GM12878 (cell line): ENCODE measurements at regions of chr22 and their contacts with region 1.

Region 1: DNA sequence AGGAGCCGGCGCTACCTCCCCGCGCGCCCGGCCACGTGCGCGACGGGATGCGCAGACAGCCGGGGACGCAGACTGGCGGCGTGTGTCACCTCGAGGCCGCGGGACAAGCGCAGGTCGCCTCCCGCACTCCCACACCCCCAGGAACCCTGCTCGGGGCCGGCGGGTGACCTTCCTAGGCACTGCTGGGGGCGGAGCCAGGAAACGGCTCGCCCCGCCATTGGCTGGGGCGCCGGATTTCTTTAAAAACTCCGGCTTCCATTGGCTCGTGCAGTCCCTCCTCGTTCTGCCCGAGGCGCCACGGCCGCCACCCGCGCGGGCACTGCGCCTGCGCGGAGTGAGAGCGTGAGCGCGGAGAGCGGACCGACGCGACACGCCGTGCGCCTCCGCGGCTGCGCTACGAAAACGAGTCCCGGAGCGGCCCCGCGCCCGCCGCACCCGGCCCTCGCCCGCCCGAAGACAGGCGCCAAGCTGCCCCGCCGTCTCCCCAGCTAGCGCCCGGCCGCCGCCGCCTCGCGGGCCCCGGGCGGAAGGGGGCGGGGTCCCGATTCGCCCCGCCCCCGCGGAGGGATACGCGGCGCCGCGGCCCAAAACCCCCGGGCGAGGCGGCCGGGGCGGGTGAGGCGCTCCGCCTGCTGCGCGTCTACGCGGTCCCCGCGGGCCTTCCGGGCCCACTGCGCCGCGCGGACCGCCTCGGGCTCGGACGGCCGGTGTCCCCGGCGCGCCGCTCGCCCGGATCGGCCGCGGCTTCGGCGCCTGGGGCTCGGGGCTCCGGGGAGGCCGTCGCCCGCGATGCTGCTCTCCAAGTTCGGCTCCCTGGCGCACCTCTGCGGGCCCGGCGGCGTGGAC is at the start of gene PIM3:
- DNase-seq: peak; percentile 84
- ATAC-seq: peak; percentile 82
- H3K4me3 ChIP-seq: peak within 1 kb of the TSS; percentile 98
- H3K27ac ChIP-seq: peak within 1 kb of the TSS; percentile 53
- H3K4me1 ChIP-seq: peaks cover 16% of the 10 kb centered on the region
- H3K27me3 ChIP-seq: no peaks in the 10 kb centered on the region
- CTCF ChIP-seq: no peak
- EP300 ChIP-seq: peak in 1 of 2 experiments; percentile 20; a peak in 1 of 4 replicates
- POLR2A ChIP-seq: peak; percentile 82
- RAD21 ChIP-seq: no peak
- polyA plus RNA-seq, gene PIM3: 0.31 to 1.5 TPM

Region 2: DNA sequence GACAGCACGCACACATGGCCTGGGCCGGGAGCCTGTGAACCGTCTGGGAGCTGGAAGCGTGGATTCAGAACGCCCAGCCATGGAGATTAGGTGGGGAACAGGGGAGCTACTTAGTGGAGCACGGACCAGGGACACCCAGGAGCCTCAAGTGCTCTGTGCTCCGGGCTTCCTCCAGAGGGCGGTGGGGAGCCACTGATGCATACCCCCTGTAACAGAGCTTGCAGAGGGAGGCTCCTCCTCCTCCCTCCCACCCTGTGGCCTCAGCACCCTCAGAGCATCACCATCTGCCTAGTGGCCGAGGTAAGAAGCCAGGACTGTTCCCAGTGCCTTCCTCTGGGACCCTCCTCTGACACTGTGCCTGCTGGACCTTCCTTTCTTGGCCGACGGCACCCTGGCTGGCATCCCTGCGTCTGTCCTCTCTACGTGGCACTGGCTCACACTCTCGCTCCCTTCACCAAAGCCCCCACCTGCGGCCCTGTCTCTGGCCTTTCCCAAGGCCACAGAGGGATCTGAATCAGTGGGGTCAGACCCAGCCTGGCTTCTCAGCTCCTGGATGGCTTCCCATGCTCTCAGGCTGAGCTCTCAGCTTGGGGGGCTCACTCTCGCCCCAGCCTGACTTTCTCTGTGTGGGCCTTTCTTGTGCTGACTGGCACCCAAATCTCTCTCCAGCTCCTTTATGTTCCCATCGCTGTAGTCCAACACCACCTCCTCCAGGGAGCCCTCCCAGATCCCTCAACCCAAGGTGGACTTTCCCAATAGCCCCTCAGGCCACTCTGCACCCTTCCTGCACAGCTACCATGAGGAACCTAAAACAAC is 913.6 kb before region 1 on chr22:
- CTCF ChIA-PET with region 1: no interaction called
- POLR2A ChIA-PET with region 1: no interaction called
- RAD21 ChIA-PET with region 1: no interaction called
- SMC1A ChIA-PET with region 1: no interaction called
- in situ Hi-C with region 1: no loop called
- intact Hi-C with region 1: no loop called
- DNase-seq: no peak
- ATAC-seq: no peak
- H3K4me3 ChIP-seq: no peak overlapping the region
- H3K27ac ChIP-seq: no peak overlapping the region
- H3K4me1 ChIP-seq: no peaks in the 10 kb centered on the region
- H3K27me3 ChIP-seq: no peaks in the 10 kb centered on the region
- CTCF ChIP-seq: peak in 2 of 3 experiments; percentile 21 to 25; a peak in 2 of 6 replicates
- EP300 ChIP-seq: no peak
- POLR2A ChIP-seq: no peak
- RAD21 ChIP-seq: no peak

Region 3: DNA sequence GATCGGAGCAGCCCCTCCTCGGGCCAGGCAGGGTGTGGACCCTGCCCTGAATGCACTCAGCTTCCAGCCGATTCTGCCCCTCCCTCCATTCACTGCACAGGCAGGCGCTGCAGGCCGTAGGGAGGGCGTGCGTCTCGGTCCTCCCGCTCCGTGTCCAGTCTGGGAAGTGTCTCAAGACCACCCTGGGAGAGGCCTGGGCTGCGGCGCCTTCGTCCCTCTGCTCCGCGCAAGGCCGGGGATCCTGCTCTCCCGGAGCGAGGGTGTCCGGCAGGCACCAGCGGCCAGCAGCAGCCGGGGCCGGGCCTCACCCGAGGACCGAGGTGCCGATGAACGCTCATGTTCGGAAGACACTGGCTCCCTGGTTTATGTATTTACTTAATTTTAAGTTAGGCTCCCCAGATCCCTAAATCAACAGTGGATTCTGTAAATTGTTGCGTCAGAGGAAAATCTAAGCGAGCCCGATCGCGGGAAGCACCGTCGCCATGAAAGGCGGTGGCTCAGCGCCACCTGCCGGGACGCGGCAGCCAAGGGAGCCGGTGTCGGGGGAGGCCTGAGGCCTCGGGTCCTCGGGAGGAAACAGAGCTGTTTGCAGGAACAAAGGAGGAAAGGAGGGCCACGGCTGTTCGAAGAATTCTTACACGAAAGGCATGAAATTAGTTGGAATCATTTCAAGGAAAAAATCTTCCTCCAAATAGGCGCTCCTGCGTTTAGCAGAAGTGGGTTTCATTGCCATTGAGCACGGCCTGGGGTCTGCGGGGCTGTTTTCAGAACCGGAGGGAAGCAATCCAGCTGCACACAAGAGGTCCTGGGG is 328.0 kb before region 1 on chr22:
- CTCF ChIA-PET with region 1: no interaction called
- POLR2A ChIA-PET with region 1: no interaction called
- RAD21 ChIA-PET with region 1: no interaction called
- SMC1A ChIA-PET with region 1: no interaction called
- in situ Hi-C with region 1: no loop called
- intact Hi-C with region 1: no loop called
- DNase-seq: no peak
- ATAC-seq: no peak
- H3K4me3 ChIP-seq: no peak overlapping the region
- H3K27ac ChIP-seq: no peak overlapping the region
- H3K4me1 ChIP-seq: no peaks in the 10 kb centered on the region
- H3K27me3 ChIP-seq: no peaks in the 10 kb centered on the region
- CTCF ChIP-seq: peak in 1 of 3 experiments; percentile 22; a peak in 1 of 6 replicates
- EP300 ChIP-seq: no peak
- POLR2A ChIP-seq: no peak
- RAD21 ChIP-seq: no peak

Region 4: GRCh38 chr22:49936018-49936952 is 24.1 kb before region 1 on chr22:
- CTCF ChIA-PET with region 1: interaction called, 6 read pairs
- POLR2A ChIA-PET with region 1: interaction called, 15 read pairs
- RAD21 ChIA-PET with region 1: interaction called, 15 read pairs
- SMC1A ChIA-PET with region 1: interaction called, 3 read pairs
- in situ Hi-C with region 1: no loop called
- intact Hi-C with region 1: no loop called
- DNase-seq: peak; percentile 69
- ATAC-seq: peak; percentile 87
- H3K4me3 ChIP-seq: peak overlapping the region; percentile 57
- H3K27ac ChIP-seq: peak overlapping the region; percentile 69
- H3K4me1 ChIP-seq: peaks cover 43% of the 10 kb centered on the region
- H3K27me3 ChIP-seq: no peaks in the 10 kb centered on the region
- CTCF ChIP-seq: no peak
- EP300 ChIP-seq: peak in 1 of 2 experiments; percentile 77; a peak in 2 of 4 replicates
- POLR2A ChIP-seq: peak; percentile 68
- RAD21 ChIP-seq: no peak

Region 5: GRCh38 chr22:49970528-49971231 is 10.3 kb after region 1 on chr22:
- CTCF ChIA-PET with region 1: interaction called, 3 read pairs
- POLR2A ChIA-PET with region 1: interaction called, 10 read pairs
- RAD21 ChIA-PET with region 1: interaction called, 6 read pairs
- SMC1A ChIA-PET with region 1: no interaction called
- in situ Hi-C with region 1: no loop called
- intact Hi-C with region 1: no loop called
- DNase-seq: peak; percentile 85
- ATAC-seq: peak; percentile 84
- H3K4me3 ChIP-seq: peak overlapping the region; percentile 76
- H3K27ac ChIP-seq: peak overlapping the region; percentile 89
- H3K4me1 ChIP-seq: peaks cover 41% of the 10 kb centered on the region
- H3K27me3 ChIP-seq: no peaks in the 10 kb centered on the region
- CTCF ChIP-seq: no peak
- EP300 ChIP-seq: peak in 1 of 2 experiments; percentile 75; a peak in 3 of 4 replicates
- POLR2A ChIP-seq: peak; percentile 91
- RAD21 ChIP-seq: no peak

Region 6: GRCh38 chr22:50185384-50186087 is 225.2 kb after region 1 on chr22 and contains the start of gene TRABD:
- CTCF ChIA-PET with region 1: no interaction called
- POLR2A ChIA-PET with region 1: interaction called, 3 read pairs
- RAD21 ChIA-PET with region 1: no interaction called
- SMC1A ChIA-PET with region 1: no interaction called
- in situ Hi-C with region 1: no loop called
- intact Hi-C with region 1: loop called (anchors 5 kb)
- DNase-seq: no peak
- ATAC-seq: peak; percentile 63
- H3K4me3 ChIP-seq: peak within 1 kb of the TSS; percentile 84
- H3K27ac ChIP-seq: peak within 1 kb of the TSS; percentile 89
- H3K4me1 ChIP-seq: peaks cover 35% of the 10 kb centered on the region
- H3K27me3 ChIP-seq: no peaks in the 10 kb centered on the region
- CTCF ChIP-seq: no peak
- EP300 ChIP-seq: no peak
- POLR2A ChIP-seq: peak; percentile 78
- RAD21 ChIP-seq: no peak
- polyA plus RNA-seq, gene TRABD: 0.43 to 2.2 TPM

Region 7: GRCh38 chr22:50227579-50228215 is 267.3 kb after region 1 on chr22:
- CTCF ChIA-PET with region 1: no interaction called
- POLR2A ChIA-PET with region 1: no interaction called
- RAD21 ChIA-PET with region 1: no interaction called
- SMC1A ChIA-PET with region 1: no interaction called
- in situ Hi-C with region 1: no loop called
- intact Hi-C with region 1: no loop called
- DNase-seq: no peak
- ATAC-seq: no peak
- H3K4me3 ChIP-seq: no peak overlapping the region
- H3K27ac ChIP-seq: no peak overlapping the region
- H3K4me1 ChIP-seq: no peaks in the 10 kb centered on the region
- H3K27me3 ChIP-seq: no peaks in the 10 kb centered on the region
- CTCF ChIP-seq: no peak
- EP300 ChIP-seq: no peak
- POLR2A ChIP-seq: no peak
- RAD21 ChIP-seq: no peak

Region 8: GRCh38 chr22:50530877-50531545 is 570.6 kb after region 1 on chr22:
- CTCF ChIA-PET with region 1: no interaction called
- POLR2A ChIA-PET with region 1: no interaction called
- RAD21 ChIA-PET with region 1: no interaction called
- SMC1A ChIA-PET with region 1: no interaction called
- in situ Hi-C with region 1: loop called (anchors 10 kb)
- intact Hi-C with region 1: no loop called
- DNase-seq: no peak
- ATAC-seq: peak; percentile 53
- H3K4me3 ChIP-seq: peak overlapping the region; percentile 78
- H3K27ac ChIP-seq: peak overlapping the region; percentile 100
- H3K4me1 ChIP-seq: peaks cover 41% of the 10 kb centered on the region
- H3K27me3 ChIP-seq: no peaks in the 10 kb centered on the region
- CTCF ChIP-seq: no peak
- EP300 ChIP-seq: no peak
- POLR2A ChIP-seq: no peak
- RAD21 ChIP-seq: no peak